Ovary (tissue), 10 donors: ENCODE measurements at regions of chr4 and their contacts with region 1.

Region 1: DNA sequence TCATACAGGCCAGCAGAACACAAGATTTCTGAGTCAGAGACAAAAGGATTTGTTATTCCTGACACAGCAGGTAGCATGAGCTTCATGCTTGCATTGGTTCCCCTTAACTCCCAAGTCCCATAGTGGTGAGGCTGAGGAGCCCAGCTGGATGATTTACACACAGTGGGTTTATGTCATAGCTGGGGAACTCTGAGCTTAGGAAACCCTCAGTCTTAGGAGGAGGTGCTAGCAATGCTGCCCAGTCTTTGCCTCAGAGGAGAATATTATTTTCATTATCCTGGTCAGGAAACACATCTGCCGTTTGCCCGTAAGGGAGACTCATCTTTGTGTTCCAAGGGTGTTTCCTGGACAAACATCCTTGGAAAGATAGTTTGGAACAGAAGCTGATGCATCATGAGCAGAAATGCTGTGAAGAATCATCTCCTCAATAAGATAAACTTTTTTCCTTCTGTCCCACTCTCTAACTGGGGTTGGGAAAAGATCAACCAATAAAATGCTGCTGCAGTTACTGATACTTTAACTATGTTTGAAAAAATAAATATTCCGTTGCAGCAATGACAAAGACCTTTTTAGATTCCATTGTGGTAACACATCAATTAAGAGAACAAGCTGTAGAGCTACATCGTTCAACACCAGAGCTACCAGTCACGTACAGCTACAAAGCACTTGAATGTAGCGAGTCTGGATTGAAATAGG is 146.8 kb downstream of the DCLK2 start:
- DNase-seq: no peak
- H3K4me3 ChIP-seq: no peak overlapping the region
- H3K27ac ChIP-seq: no peak overlapping the region
- H3K4me1 ChIP-seq: peaks cover 3% of the 10 kb centered on the region
- H3K27me3 ChIP-seq: no peaks in the 10 kb centered on the region
- CTCF ChIP-seq: no peak
- EP300 ChIP-seq: no peak
- POLR2A ChIP-seq: no peak

Region 2: GRCh38 chr4:150010525-150011126 is 214.4 kb before region 1 on chr4:
- intact Hi-C with region 1: loop called in 1 of 4 experiments (anchors 10 kb)
- DNase-seq: peak; percentile 15 to 49 (median 30)
- H3K4me3 ChIP-seq: no peak overlapping the region
- H3K27ac ChIP-seq: no peak overlapping the region
- H3K4me1 ChIP-seq: peaks cover 5% of the 10 kb centered on the region
- H3K27me3 ChIP-seq: no peaks in the 10 kb centered on the region
- CTCF ChIP-seq: peak in 2 of 3 donors; percentile 40 to 42
- EP300 ChIP-seq: no peak
- POLR2A ChIP-seq: no peak